Cardiac septum (tissue), 1 donor: ENCODE measurements at regions of chr2 and their contacts with region 1.

Region 1: DNA sequence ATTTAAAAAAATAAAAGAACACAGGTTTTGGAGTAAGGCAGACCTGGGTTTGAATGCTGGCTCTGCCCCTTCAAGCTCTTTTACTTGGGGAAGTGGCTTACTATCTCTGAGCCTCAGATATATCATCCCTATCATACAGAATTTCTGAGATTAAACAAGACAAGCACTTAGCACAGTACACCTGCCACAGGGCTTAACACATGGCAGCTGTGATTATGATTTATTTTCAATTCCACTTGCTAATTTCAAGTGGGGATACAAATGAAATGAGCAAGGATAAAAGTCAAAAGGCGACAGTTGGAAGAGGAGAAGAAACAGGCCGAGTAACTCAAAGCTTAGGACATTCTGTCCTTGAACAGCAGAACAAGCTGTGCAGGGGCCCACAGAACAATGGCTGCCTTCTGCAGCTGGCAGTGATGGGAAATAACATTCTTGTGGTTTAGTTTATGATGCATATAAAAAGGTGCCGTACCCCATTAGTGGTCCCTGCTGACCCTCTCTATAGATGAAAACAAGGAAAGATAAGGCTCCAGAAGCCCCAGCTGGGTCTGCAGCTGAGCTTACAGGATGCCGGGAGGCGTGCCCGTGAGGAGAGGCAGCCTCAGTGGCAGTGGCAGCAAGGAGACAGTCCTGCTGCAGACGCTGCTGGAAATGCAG is 45.3 kb downstream of the KIF3C start:
- DNase-seq: no peak

Region 2: DNA sequence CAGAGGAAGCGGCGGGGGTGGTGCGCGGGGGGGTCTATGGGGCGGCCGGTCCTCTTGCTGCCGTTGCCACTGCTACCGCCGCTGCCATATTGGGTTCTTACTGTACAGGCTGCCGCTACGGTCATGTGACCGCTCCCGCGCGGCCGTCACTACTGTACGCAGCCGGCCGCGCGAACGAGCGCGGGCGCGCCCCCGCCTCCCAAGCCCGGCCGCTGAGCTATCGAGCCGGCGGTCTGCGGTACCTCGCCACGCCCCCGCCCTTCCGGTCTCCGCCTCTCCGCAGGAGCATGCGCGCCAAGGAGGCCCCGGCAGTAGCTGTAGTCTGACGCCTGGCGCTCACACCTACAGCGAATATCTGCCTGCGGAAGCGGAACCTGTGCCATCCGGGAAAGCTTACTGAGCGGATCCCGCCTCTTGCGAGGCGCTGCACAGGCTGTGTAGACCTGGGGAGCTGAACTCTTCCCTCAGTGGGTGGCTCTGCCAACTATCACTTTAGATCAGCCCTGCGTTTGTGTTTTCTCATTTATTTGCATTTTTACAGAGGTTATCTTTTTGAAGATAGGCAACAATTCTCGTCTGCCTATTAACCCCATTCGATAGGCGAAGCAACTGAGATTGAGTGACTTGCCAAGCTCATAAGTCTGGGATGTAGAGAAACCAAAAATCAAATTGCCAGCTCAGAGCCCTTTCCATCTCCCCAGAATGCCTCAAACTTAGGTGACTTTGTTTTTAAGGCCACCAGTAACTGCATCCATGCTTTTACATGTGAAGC is 58.5 kb before region 1 on chr2 and contains the start of gene ASXL2:
- intact Hi-C with region 1: loop called (anchors 5 kb)
- DNase-seq: peak; percentile 99
- total RNA-seq, gene ASXL2: 24.1 TPM

Region 3: DNA sequence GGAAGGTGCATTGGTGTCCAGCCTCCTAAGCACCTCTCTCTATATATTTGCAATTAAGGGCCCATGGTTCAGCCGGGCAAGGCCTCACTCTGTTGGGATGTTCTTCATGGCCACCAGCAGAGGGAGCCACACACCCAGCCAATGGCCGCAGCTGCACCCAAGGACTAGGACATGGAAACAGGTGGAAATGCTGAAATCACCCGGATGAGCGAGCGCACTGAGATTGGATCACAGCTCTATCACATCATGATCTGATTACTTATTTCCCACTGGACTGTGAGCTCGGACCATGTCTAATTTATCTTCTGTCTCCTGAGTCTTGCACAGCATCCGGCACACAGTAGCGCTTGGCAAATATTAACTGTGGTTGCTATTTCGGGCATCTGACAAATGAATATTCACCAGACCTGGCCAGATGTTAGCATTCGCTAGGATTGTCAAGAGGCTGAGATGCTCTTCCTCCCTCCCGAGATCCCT is 14.1 kb after region 1 on chr2:
- intact Hi-C with region 1: no loop called
- DNase-seq: peak; percentile 91